Activated CD8-positive, alpha-beta T cell treated with anti-CD3 and anti-CD28 coated beads, Interleukin-2, amount 10 ng/mL, durations not matched to agents 7 days and 5 days (primary cell): ENCODE measurements at regions of chr10 and their contacts with region 1.

Region 1: DNA sequence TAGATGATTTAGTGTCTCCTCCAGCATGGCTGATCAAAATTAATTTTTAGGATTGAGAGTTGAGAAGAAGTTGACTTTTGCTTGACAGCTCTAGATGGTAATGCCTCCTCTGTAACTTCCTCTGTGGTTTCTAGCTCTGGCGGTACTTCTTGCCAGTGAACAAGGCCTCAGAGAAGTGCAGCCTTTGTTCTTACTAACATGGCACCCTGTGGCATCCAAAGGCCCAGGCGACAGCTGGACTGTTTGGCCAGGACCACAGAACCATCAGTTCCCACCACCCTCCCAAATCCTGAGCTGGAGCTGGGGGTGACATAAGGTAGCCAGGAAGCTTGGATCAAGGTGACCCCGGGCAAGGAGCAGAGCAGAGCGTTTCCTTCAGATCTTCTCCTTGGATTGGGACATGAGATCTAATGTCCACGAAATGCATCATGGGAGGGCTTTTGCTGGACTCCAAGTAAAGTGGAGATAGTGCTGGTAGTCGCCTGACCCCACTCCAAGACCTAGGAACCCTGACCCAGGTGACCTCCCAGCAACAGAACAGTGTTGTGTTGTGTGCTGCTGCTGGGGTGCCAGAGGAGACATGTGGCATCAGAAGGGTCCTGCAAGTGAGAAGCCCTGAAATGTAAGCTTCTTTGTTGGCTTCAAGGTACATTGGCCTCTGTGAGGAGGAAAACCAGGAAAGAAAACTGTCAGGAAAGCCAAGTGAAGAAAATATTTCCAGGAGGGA is 41.8 kb downstream of the APBB1IP start:
- DNase-seq: peak; percentile 74
- ATAC-seq: peak; percentile 64
- H3K4me3 Mint-ChIP-seq: peak overlapping the region; percentile 55
- H3K27ac Mint-ChIP-seq: peak overlapping the region; percentile 92
- H3K4me1 Mint-ChIP-seq: peaks cover 75% of the 10 kb centered on the region
- H3K27me3 Mint-ChIP-seq: no peaks in the 10 kb centered on the region

Region 2: GRCh38 chr10:26448706-26449435 is 31.1 kb before region 1 on chr10:
- CTCF ChIA-PET with region 1: interaction called, 10 read pairs
- POLR2A ChIA-PET with region 1: interaction called, 7 read pairs
- DNase-seq: peak; percentile 92
- ATAC-seq: peak; percentile 83
- H3K4me3 Mint-ChIP-seq: peak overlapping the region; percentile 65
- H3K27ac Mint-ChIP-seq: peak overlapping the region; percentile 90
- H3K4me1 Mint-ChIP-seq: peaks cover 85% of the 10 kb centered on the region
- H3K27me3 Mint-ChIP-seq: no peaks in the 10 kb centered on the region